GM10248 (cell line): ENCODE measurements at regions of chr15 and their contacts with region 1.

Region 1: DNA sequence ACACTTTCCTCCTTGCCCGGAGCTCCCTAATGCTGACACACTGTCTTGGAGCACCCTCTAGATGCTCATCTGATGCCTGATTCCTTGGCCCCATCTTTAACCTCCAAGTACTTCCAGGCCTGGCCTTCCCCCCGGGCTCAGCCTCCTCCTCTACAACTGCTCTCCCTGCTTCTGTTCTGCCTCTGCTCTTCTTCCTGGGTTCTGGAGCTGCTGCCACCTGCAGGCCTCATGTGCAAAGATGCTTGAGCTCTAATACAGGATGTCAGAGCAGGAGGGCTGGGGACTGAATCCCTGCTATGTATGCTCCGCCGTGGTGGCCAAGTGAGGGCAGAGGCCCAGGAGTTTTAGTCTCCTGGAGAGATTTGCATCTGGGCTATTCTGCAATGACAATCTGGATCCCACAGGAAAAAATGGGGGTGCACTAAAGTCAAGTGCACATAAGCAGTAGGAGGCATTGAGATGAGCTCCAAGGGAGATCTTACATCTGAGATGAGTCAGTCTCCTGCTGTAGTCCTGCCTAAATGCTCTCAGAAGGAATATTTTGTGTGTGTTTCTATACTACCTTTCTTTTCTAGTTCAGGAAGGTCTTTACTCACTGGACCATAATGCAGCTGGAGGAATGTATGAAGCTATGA is 296.3 kb downstream of the UACA start:
- DNase-seq: peak; percentile 69
- CTCF ChIP-seq: peak; percentile 84

Region 2: DNA sequence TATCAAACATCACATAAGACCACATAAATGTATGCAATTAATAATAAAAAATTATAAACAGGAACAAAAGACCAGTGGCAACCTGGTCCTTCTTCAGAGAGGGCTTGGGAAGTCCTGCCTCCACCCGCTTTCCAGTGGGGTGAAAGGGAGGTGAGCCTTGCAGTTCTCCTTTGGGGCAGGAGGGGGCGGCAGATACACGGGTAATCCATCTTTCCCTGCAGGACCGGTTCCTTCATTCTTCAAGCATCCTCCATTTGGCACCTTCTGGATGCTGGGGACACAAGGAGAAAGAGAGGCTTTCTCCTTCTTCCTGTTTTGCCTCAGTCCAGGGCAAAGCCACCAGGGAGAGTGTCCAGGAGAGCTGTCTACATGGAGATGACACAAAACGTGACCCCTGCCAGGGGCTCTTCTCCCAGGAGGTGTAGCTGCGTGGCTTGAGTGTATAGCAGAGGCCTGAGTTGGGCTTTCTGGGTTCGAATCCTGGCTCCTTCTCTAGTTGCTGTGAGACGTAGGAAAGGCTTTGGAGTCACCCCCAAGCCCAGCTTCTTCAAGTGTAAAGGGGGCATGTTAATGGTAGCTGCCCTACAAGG is 991.1 kb before region 1 on chr15:
- CTCF ChIA-PET with region 1: interaction called, 11 read pairs
- POLR2A ChIA-PET with region 1: no interaction called
- DNase-seq: peak; percentile 70
- CTCF ChIP-seq: peak; percentile 95

Region 3: DNA sequence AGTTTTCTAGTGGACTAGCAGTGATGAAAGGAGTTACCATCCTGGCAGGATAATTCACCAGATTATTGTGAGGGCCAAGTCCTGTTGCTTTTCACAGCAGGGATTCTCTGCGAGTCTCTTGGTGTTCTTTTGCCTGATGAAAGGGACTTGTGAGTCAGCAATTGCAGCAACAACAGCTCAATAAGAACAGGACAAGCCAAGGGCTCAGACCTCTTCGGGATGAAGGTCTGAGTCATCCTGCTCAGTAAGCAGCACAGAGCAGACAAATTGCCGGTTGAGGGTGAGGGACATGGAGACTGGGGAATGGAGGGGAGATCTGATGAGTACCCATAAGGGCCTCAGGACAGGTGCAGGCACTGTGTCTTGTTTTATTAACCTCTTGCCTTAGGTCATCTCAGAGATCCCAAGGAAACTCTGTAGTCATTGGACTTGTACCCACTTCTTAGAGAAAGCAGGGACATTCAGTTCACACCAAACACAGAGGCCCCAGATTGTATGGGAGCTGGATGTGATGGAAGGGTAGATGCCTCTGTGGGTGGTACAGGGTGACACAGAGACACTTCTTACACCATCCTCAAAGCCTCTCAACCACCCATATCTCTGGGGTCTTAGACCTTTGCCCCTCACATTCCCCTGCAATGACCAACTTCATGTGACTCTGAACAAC is 195.5 kb before region 1 on chr15:
- CTCF ChIA-PET with region 1: interaction called, 12 read pairs
- POLR2A ChIA-PET with region 1: no interaction called
- DNase-seq: no peak
- CTCF ChIP-seq: no peak

Region 4: GRCh38 chr15:70385072-70385535 is 81.9 kb before region 1 on chr15:
- CTCF ChIA-PET with region 1: no interaction called
- POLR2A ChIA-PET with region 1: no interaction called
- DNase-seq: no peak
- CTCF ChIP-seq: no peak

Region 5: GRCh38 chr15:70447928-70448698 is 18.9 kb before region 1 on chr15:
- CTCF ChIA-PET with region 1: interaction called, 19 read pairs
- POLR2A ChIA-PET with region 1: no interaction called
- DNase-seq: no peak
- CTCF ChIP-seq: no peak

Region 6: GRCh38 chr15:70488002-70488605 is 21.1 kb after region 1 on chr15:
- CTCF ChIA-PET with region 1: interaction called, 285 read pairs
- POLR2A ChIA-PET with region 1: interaction called, 4 read pairs
- DNase-seq: peak; percentile 73
- CTCF ChIP-seq: peak; percentile 93

Region 7: DNA sequence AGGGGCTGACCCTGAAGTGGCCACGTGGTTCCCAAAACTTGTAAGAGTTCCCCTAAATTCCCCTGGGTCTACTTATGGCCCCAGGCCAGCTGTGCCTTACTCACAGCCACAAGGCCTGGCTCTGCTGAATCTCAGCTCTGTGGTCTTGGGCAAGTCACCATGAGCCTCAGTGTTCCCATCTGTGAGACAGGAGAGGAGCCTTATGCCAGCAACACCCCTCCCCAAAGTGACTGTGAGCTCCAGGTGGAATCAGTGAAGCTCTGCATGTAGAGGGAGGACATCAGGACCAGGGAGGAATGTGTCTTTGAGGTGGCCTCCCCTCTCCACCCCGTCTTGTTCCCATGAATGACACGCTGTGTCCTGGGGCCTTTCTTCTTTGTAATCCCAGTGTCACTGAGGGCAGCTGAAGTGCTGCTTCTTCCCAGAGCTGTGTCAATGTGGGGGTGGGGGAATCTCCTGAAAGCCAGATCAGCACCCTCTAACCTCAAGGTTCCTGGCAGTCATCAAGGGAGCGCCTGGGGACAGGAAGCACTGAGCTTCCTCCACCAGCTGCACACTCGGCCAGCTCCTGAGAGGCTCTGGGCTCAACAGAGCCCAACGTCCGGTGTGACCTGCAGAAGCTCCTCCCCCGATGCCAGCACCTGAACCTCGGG is 37.4 kb after region 1 on chr15:
- CTCF ChIA-PET with region 1: interaction called, 52 read pairs
- POLR2A ChIA-PET with region 1: no interaction called
- DNase-seq: peak; percentile 69
- CTCF ChIP-seq: no peak

Region 8: GRCh38 chr15:70741107-70741531 is 274.1 kb after region 1 on chr15:
- CTCF ChIA-PET with region 1: no interaction called
- POLR2A ChIA-PET with region 1: no interaction called
- DNase-seq: no peak
- CTCF ChIP-seq: no peak